ENCODE measurements at regions of chr18 and their contacts with region 1.

Region 1: DNA sequence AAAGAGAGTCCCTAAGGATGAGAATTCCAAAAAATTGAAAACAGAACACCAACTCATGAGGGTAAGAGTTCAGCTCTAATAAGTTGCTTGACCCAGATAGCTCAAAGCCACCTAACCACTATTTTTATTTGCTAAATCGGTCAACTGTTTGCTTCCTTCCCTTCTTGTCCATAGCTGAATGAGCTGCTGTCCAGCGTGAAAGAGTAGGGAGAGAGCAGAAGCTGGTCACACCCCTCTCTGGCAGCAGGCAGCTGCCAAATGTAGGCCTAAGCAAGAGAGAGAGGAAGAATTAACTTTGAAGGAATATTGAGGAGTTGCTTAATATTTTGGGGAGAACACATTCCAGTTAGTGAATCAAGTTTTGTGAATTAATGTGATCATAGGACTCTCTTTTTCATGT is 25.9 kb downstream of the AQP4 start:
- DNase-seq: no peak
- H3K4me3 ChIP-seq: no peak overlapping the region
- H3K27ac ChIP-seq: no peak overlapping the region
- H3K4me1 ChIP-seq: no peaks in the 10 kb centered on the region
- H3K27me3 ChIP-seq: no peaks in the 10 kb centered on the region

Region 2: DNA sequence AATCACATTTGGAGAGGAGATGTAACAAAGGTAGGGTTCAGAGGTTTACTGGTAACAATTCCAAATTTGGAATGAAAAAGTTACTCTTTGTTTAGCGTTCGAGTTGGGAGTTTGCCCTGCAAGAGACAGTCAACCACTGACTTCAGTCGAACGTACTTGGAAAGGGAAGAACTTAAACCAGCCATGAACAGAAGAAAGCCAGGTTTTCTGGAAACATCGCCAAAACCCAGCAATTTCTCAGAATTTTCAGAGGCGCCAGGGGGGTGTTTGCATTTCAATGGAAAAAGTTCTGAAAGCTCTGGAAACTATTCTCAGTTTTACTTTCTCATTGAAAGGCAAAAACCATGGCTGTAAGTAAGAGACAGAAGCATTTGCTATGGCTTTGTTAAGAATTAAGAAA is 54.4 kb after region 1 on chr18:
- in situ Hi-C with region 1: loop called (anchors 10 kb)
- DNase-seq: no peak
- H3K4me3 ChIP-seq: no peak overlapping the region
- H3K27ac ChIP-seq: no peak overlapping the region
- H3K4me1 ChIP-seq: no peaks in the 10 kb centered on the region
- H3K27me3 ChIP-seq: no peaks in the 10 kb centered on the region